ENCODE measurements at regions of chr15 and their contacts with region 1.

Region 1: DNA sequence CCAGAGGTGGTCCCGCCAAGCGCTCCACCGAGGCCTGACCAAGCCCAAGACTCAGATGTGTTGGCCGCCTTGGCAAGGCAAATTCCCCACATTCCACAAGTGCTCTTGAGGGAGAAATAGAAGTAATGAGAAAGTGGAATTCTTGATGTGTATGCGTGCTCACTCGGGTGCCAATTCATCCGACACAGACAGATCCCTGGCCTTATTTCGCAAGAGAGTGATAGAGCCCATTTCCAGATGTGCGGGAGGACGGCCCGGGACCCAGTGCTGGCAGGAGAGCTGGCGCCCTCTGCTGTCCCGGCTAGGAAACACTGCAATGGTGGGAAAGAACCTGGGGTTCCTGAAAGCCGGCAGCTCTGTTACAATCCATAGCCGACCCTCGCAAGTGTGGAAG is 76.0 kb downstream of the HMG20A start:
- DNase-seq: peak; percentile 83
- H3K4me3 Mint-ChIP-seq: no peak overlapping the region
- H3K27ac Mint-ChIP-seq: no peak overlapping the region
- H3K4me1 Mint-ChIP-seq: peaks cover 18% of the 10 kb centered on the region
- H3K27me3 Mint-ChIP-seq: no peaks in the 10 kb centered on the region

Region 2: DNA sequence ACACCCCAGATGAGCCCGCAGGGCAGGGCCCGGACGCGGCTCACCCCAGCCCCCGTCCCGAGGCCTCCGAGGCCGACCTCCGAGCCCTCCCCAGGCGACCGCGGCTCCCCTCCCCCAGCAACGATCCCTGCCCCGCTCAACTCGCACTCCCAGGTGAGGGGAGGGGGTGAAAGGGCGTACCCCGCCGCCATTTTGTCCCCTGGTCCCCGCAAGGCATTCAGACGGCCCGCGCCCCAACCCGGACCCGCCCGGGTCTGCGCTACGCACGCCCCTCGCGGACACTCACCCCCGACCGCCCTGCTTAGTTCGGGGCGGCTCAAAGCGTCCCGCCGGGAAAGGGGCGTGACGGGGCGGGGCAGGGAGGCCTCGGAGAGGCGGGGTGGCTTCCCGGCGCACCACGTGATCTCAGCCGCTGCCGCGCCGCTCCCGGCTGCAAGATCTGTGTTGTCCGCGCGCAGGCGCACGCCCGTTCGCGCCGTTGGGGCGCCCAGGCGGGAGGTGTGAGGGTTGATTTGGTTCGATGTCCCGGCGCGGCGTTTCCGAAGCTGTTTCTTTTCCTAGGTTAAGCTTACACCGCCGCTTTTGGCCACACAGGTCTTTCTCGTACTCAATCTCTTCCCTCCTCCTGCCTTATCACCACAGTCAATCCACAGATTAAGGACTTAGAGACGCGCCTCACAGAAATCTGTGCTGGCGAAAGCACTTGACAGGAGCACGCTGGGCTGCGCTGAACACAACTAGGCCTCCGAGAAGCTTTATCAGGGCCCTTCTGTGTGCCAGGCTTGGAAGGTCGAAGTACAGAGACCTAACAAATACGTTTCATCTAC is 591.5 kb before region 1 on chr15 and contains the start of gene SCAPER:
- CTCF ChIA-PET with region 1: no interaction called
- intact Hi-C with region 1: loop called (anchors 2 kb)
- DNase-seq: peak; percentile 93
- H3K4me3 Mint-ChIP-seq: peak within 1 kb of the TSS; percentile 83
- H3K27ac Mint-ChIP-seq: peak within 1 kb of the TSS; percentile 91
- H3K4me1 Mint-ChIP-seq: peaks cover 31% of the 10 kb centered on the region
- H3K27me3 Mint-ChIP-seq: no peaks in the 10 kb centered on the region
- total RNA-seq, gene SCAPER: 28.5 to 28.9 TPM

Region 3: DNA sequence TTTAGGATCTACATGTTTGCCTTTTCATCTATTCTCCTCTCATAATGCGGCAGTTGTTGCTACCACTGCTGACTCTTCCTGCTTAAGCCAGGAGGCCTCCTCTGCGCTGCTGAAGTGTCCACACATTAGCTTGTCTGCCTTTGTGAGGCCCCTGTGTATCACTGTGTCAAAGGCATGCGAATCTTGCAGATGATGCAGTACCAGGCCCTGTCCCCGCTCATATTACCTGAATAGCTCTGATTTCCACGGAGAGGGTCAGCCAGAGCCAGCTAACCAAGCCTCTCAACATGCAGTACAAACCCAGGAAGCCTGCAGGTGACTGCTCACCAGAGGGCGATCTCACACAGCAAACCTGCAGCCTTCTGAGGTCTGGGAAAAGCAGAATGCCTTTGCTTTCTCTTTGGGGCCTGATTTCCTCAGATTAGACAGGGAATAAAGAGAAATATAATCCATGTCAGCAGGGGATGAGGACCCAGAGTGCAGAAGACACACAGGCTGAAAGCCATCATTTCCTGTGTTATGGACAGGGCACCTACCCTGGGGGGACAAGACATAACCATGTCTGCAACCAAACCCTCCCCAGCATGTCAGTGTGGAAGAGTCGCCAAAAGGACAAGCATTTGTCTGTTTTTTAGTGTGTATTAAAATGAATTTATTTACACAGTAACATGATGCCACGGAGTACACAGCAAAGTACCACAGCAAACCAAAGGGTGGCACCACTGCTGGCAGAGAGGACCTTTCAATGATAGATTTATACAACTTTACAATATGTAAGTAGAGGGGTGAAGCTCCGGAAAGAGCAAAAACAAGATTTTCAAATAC is 389.0 kb before region 1 on chr15:
- CTCF ChIA-PET with region 1: interaction called, 36 read pairs
- intact Hi-C with region 1: no loop called
- DNase-seq: peak; percentile 71
- H3K4me3 Mint-ChIP-seq: no peak overlapping the region
- H3K27ac Mint-ChIP-seq: no peak overlapping the region
- H3K4me1 Mint-ChIP-seq: no peaks in the 10 kb centered on the region
- H3K27me3 Mint-ChIP-seq: no peaks in the 10 kb centered on the region

Region 4: GRCh38 chr15:77118882-77119321 is 377.8 kb before region 1 on chr15:
- CTCF ChIA-PET with region 1: interaction called, 36 read pairs
- intact Hi-C with region 1: loop called (anchors 1 kb)
- DNase-seq: peak; percentile 64
- H3K4me3 Mint-ChIP-seq: no peak overlapping the region
- H3K27ac Mint-ChIP-seq: no peak overlapping the region
- H3K4me1 Mint-ChIP-seq: peaks cover 8% of the 10 kb centered on the region
- H3K27me3 Mint-ChIP-seq: no peaks in the 10 kb centered on the region

Region 5: GRCh38 chr15:77186594-77187011 is 310.1 kb before region 1 on chr15:
- CTCF ChIA-PET with region 1: interaction called, 37 read pairs
- intact Hi-C with region 1: loop called (anchors 1 kb)
- DNase-seq: peak; percentile 35
- H3K4me3 Mint-ChIP-seq: no peak overlapping the region
- H3K27ac Mint-ChIP-seq: no peak overlapping the region
- H3K4me1 Mint-ChIP-seq: peaks cover 52% of the 10 kb centered on the region
- H3K27me3 Mint-ChIP-seq: no peaks in the 10 kb centered on the region

Region 6: DNA sequence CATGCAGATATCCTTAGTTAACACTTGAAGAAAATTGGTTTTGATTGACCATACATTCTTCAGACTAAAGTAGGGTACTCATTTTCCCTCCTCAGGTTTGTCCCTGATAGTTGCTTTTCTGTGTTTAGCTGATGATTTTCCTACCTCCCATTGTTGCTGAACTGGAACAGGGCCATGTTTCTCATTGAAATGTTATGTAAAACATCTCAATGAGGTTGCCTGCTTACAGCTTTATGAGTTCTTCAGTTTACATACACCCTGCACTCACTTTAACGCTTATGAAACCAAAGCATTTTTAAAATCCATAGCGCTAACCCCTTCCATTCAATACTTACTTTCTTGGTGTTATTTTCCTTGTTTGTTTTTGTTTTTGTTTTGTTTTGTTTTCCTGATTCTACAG is 14.1 kb before region 1 on chr15:
- CTCF ChIA-PET with region 1: interaction called, 11 read pairs
- intact Hi-C with region 1: no loop called
- DNase-seq: no peak
- H3K4me3 Mint-ChIP-seq: no peak overlapping the region
- H3K27ac Mint-ChIP-seq: no peak overlapping the region
- H3K4me1 Mint-ChIP-seq: peaks cover 11% of the 10 kb centered on the region
- H3K27me3 Mint-ChIP-seq: no peaks in the 10 kb centered on the region

Region 7: DNA sequence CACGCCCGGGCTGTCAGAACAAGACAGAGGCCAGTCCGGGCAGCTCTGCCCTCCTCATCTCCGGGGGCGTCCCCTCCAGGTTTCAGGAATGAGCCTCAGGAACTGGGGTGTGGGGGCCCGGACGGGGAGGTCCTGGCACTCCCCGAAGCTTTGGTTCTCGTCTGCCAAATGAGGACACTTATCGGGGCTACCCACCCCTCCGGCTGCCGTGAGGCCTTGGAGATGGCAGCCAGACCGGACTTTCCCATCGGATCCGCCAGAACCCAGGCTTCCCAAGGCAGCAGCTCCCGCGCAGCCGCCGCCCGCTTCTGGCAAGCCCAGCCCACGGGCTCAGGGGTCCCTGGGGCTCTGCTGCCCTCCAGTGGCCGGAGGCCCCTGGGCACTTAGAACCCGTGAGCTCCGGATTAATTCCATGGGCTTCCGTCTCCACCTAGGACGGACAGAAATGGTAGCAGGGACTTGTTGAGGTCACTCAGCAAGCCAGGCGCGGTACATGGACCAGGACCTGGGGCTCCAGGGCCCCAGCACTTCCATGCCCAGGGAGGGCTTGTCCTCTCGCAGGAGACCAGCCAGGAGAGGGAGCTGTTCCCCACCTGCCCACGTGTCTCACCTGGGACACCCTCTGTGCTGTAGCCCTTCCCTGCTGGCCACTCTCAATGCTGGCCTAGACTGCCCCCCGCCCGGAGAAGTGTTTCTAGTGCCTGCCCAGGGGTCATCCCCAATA is 46.6 kb after region 1 on chr15:
- CTCF ChIA-PET with region 1: interaction called, 24 read pairs
- intact Hi-C with region 1: no loop called
- DNase-seq: peak; percentile 84
- H3K4me3 Mint-ChIP-seq: peak overlapping the region; percentile 67
- H3K27ac Mint-ChIP-seq: no peak overlapping the region
- H3K4me1 Mint-ChIP-seq: peaks cover 10% of the 10 kb centered on the region
- H3K27me3 Mint-ChIP-seq: no peaks in the 10 kb centered on the region

Measured in activated naive CD4-positive, alpha-beta T cell treated with anti-CD3 and anti-CD28 coated beads for 36 hours (primary cell).